ENCODE measurements at regions of chr10 and their contacts with region 1.

Region 1: DNA sequence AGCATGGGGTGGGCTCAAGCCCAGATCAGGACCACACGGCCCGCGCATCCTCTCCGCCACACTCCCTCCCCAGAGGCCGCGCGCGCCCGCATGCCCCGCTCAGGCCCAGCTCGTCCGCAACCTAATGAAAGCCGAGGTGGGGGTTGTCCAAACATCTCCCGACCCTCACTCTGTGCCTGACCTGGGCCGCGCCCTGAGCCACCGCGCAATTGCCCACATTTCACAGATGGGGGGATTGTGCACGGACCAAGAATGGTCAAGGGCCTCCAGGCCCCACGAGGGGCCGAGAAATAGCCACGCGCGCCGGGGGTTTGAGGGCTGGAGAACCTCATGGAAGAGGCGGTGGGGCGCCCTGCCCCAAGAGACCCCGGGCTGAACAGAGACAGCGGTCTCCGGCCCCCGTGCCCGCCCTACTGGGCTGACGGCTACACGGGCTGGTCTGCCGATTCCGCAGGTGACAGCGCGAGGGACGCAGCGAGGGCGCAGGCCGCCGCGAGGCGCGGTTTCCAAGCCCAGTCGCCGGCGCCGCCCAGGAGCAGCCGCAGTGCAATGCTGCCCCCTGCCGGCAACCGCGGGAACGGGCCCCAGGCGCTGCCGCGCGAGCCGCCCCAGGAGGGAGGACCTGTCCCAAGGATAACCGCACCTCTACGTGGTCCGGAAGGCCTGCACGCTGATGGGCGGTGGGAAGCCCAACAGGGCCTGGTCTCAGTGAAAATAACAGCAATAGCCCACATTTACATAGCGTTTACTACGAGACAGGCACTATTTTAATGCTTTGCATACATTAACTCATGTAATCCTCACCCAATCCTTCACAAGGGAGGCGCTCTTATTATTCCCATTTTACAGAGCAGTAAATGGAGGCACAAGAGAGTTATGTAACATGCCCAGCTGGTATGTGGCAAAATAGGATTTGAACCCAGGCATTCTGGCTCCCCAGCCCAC is 10.5 kb upstream of the GRID1 start:
- DNase-seq: peak; percentile 58
- H3K4me3 Mint-ChIP-seq: no peak overlapping the region
- H3K27ac Mint-ChIP-seq: no peak overlapping the region
- H3K4me1 Mint-ChIP-seq: no peaks in the 10 kb centered on the region
- H3K27me3 Mint-ChIP-seq: peaks cover 15% of the 10 kb centered on the region
- CTCF ChIP-seq: peak; percentile 98

Region 2: GRCh38 chr10:84375011-84375410 is 2002.1 kb before region 1 on chr10:
- CTCF ChIA-PET with region 1: no interaction called
- POLR2A ChIA-PET with region 1: no interaction called
- intact Hi-C with region 1: loop called (anchors 10 kb)
- DNase-seq: peak; percentile 70
- H3K4me3 Mint-ChIP-seq: no peak overlapping the region
- H3K27ac Mint-ChIP-seq: no peak overlapping the region
- H3K4me1 Mint-ChIP-seq: peaks cover 5% of the 10 kb centered on the region
- H3K27me3 Mint-ChIP-seq: no peaks in the 10 kb centered on the region
- CTCF ChIP-seq: peak; percentile 68

Region 3: DNA sequence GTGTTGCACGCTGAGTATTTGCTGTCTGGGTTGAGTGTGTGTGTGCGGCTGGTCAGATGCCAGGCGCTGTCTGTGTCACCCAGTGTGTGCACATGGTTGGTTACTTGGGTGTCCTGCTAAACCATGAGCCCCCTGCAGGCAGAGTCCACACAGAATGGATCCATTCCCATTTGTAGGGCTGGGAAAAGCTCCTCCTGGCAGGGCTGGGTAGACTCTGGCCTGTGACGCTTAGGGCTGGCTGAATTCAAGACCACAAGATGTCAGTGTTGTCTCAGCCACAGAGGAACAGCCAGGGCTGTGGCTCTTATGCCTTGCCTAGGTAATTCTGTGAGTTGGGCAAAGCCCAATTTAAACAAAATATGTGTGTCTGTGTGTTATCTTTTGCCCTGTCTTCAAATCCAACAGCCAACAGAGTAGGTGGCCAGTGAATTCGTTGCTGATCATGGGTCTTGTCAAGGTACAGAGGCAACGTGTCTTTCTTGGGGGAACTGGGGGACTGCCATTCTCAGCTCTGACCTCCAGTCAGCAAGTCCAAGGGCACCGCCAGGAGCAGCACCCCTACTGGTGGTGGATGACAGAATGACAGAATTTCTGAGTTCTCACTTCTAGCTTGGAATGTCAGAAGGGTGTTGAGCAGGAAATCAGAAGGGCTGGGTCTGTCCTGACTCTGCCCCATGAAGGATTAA is 1763.6 kb before region 1 on chr10:
- CTCF ChIA-PET with region 1: interaction called, 4 read pairs
- POLR2A ChIA-PET with region 1: no interaction called
- intact Hi-C with region 1: loop called (anchors 10 kb)
- DNase-seq: peak; percentile 70
- H3K4me3 Mint-ChIP-seq: no peak overlapping the region
- H3K27ac Mint-ChIP-seq: no peak overlapping the region
- H3K4me1 Mint-ChIP-seq: no peaks in the 10 kb centered on the region
- H3K27me3 Mint-ChIP-seq: no peaks in the 10 kb centered on the region
- CTCF ChIP-seq: peak; percentile 22

Region 4: DNA sequence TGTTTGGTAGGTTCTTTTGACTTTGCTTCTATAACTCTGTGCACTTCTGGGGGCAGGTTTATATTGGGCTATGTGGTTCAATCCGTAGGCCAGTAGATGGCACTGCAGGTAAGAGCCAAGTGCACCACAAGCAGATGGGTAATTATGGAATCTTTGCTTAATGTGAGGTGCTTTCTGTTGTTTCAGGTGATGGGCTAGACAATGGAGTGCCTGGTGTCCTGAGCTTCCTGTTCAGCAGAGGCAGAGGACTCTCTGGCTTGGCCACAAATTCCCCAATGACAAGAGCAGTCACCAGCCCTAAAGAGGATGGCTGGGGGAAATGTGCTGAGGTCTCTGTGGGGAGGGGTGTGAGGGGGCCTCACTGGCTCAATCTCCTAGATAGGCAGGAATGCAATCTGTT is 1593.7 kb before region 1 on chr10:
- CTCF ChIA-PET with region 1: interaction called, 3 read pairs
- POLR2A ChIA-PET with region 1: no interaction called
- intact Hi-C with region 1: loop called (anchors 1 kb)
- DNase-seq: peak; percentile 68
- H3K4me3 Mint-ChIP-seq: no peak overlapping the region
- H3K27ac Mint-ChIP-seq: no peak overlapping the region
- H3K4me1 Mint-ChIP-seq: no peaks in the 10 kb centered on the region
- H3K27me3 Mint-ChIP-seq: peaks cover 15% of the 10 kb centered on the region
- CTCF ChIP-seq: peak; percentile 46

Region 5: GRCh38 chr10:85548034-85548433 is 829.1 kb before region 1 on chr10:
- CTCF ChIA-PET with region 1: interaction called, 3 read pairs
- POLR2A ChIA-PET with region 1: no interaction called
- intact Hi-C with region 1: loop called (anchors 1 kb)
- DNase-seq: peak; percentile 86
- H3K4me3 Mint-ChIP-seq: no peak overlapping the region
- H3K27ac Mint-ChIP-seq: no peak overlapping the region
- H3K4me1 Mint-ChIP-seq: peaks cover 23% of the 10 kb centered on the region
- H3K27me3 Mint-ChIP-seq: no peaks in the 10 kb centered on the region
- CTCF ChIP-seq: peak; percentile 43

Region 6: GRCh38 chr10:85741626-85742300 is 635.4 kb before region 1 on chr10:
- CTCF ChIA-PET with region 1: no interaction called
- POLR2A ChIA-PET with region 1: no interaction called
- intact Hi-C with region 1: no loop called
- DNase-seq: no peak
- H3K4me3 Mint-ChIP-seq: peak overlapping the region; percentile 48
- H3K27ac Mint-ChIP-seq: peak overlapping the region; percentile 3
- H3K4me1 Mint-ChIP-seq: no peaks in the 10 kb centered on the region
- H3K27me3 Mint-ChIP-seq: no peaks in the 10 kb centered on the region
- CTCF ChIP-seq: no peak

Region 7: DNA sequence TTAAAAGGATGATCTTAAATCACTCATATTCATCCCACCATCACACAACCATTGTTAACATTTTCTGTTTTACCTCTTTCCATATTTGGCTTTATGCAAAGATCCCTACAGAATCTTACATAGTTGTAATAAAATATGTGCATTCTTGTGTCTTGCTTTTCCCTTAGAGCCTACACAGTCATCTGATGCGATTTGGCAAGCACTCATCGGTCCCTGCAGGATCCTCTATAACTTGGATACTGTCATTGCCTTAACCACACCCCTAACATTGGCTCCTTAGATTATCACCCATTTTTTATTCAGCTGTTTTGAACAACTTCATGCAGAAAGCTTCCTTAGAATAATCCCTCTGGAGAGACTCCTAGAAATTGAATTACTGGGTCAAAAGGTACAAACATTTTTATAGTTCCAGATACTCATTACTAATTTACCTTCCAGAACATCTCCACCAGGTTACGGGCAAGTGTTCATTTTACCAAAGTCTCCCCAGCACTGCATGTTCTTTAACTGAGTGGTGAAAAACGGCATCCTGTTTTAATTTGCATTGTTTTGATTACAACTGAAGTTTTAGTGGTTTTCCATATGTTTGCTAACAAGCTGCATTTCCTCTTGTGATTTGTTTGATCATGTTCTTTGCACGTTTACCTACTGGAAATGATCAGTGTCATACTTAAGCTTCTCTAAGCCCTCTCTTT is 278.8 kb before region 1 on chr10:
- CTCF ChIA-PET with region 1: interaction called, 3 read pairs
- POLR2A ChIA-PET with region 1: no interaction called
- intact Hi-C with region 1: loop called (anchors 1 kb)
- DNase-seq: no peak
- H3K4me3 Mint-ChIP-seq: no peak overlapping the region
- H3K27ac Mint-ChIP-seq: no peak overlapping the region
- H3K4me1 Mint-ChIP-seq: no peaks in the 10 kb centered on the region
- H3K27me3 Mint-ChIP-seq: no peaks in the 10 kb centered on the region
- CTCF ChIP-seq: no peak

Region 8: DNA sequence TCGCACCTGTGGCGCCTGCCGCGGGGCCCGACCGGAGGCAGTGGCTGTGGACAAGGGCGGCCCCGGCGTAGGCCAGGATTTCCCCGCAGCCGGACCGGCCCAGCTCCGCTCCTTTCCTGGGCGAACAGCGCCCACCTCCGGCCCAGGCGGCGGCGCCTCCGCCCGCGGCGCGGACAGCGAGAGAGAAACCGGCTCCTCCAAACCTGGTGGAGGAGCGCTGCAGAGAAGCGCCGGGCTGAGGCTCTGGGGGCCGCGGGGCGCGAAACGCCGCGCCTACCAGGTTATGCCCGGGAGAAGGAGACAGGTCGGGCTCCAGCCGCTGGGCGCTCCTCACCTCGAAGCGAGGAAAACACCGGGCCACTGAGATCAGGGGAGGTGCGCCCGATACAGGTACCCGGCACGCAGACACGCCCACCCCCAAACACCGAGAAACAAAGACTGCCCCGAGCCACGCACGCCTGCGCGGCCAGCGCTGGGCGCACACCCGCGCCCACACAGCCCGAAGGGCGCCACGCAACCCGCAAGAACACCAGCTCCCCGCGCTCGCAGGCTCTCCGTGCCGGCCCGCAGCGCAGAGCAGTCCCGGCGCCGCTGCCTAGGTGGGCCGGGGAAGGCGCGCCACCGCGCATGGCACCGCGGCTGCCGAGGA is 13.8 kb before region 1 on chr10:
- CTCF ChIA-PET with region 1: interaction called, 10 read pairs
- POLR2A ChIA-PET with region 1: no interaction called
- intact Hi-C with region 1: no loop called
- DNase-seq: no peak
- H3K4me3 Mint-ChIP-seq: peak overlapping the region; percentile 38
- H3K27ac Mint-ChIP-seq: no peak overlapping the region
- H3K4me1 Mint-ChIP-seq: peaks cover 6% of the 10 kb centered on the region
- H3K27me3 Mint-ChIP-seq: peaks cover 32% of the 10 kb centered on the region
- CTCF ChIP-seq: peak; percentile 52

Region 9: DNA sequence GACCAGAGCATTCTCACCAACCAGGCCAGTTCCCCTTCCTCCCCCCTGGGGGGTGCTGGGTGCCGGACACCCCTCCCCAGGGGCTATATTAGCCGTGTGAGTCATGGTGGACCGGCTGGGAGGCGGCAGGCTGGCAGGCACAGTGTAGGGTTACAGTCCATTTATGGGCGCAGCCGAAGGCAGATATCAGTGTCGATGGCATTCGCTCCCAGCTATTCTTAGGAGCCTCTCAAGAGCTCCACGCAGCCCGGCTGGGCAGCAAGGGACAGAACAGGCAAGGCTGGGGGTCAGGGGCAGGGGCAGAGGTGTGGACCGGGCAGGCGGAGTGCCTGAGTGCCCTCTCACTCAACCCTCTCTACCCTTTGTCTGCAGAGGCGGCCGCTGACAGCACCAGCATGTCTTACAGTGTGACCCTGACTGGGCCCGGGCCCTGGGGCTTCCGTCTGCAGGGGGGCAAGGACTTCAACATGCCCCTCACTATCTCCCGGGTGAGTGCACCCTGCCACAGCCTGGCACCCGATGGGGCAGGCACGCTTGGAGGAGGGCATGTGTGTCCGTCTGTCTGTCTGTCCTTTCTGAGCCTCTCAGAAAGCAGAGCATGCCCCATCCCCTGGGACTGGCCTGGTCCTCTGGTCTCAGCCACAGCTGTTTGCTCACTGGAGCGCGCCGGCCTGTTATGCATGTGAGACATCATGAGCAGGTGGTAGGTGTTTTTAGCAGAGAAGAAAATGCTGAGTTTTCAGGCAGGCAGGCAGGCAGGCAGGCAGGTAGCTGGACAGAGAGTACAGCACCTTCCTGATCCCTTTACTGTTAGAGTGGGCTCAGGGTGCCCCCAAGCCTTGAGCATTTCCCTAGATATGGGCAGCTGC is 291.4 kb after region 1 on chr10 and contains the start of gene LDB3:
- CTCF ChIA-PET with region 1: no interaction called
- POLR2A ChIA-PET with region 1: no interaction called
- intact Hi-C with region 1: no loop called
- DNase-seq: peak; percentile 34
- H3K4me3 Mint-ChIP-seq: no peak within 1 kb of the TSS
- H3K27ac Mint-ChIP-seq: no peak within 1 kb of the TSS
- H3K4me1 Mint-ChIP-seq: peaks cover 7% of the 10 kb centered on the region
- H3K27me3 Mint-ChIP-seq: no peaks in the 10 kb centered on the region
- CTCF ChIP-seq: no peak
- total RNA-seq, gene LDB3: 0.23 and 0.29 TPM in 2 replicates

Measured in MCF 10A (cell line).